MCF 10A (cell line): ENCODE measurements at regions of chr5 and their contacts with region 1.

Region 1: DNA sequence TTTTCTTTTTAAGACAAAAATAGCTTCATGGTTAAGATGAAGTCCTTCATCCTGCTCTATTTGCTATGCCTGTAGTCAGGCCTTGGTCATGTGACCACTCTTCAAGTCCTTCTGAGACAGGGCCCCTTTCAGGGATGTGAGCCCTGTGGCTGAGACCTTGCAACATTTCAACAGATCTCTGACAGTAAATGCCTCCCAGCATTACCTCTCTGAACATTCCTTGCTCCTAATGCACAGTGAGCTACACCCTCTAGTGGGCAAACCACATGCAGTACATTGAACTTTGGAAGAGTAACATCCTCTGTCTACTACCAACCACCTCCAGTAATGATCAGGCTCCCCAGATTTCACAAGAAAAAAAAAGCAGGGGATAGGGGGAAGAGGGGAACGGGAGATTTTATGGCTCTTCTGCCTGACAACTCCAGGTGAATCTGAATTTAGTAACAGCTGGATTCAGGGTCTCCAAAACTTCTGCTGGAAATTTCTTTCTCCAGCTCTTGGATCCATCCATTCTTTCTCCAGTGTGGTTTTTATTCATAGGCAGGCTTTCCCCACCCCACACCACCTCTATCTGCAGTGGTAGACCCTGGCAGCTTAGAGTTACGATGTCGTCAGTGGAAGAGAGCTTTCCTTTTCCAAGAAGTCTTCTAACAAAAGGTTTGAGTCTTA is 8.9 kb upstream of the FBXO38 start:
- DNase-seq: peak; percentile 86
- H3K4me3 Mint-ChIP-seq: no peak overlapping the region
- H3K27ac Mint-ChIP-seq: no peak overlapping the region
- H3K4me1 Mint-ChIP-seq: peaks cover 7% of the 10 kb centered on the region
- H3K27me3 Mint-ChIP-seq: no peaks in the 10 kb centered on the region
- CTCF ChIP-seq: peak; percentile 94

Region 2: GRCh38 chr5:148163345-148163744 is 211.5 kb before region 1 on chr5:
- CTCF ChIA-PET with region 1: interaction called, 10 read pairs
- POLR2A ChIA-PET with region 1: no interaction called
- intact Hi-C with region 1: no loop called
- DNase-seq: no peak
- H3K4me3 Mint-ChIP-seq: no peak overlapping the region
- H3K27ac Mint-ChIP-seq: no peak overlapping the region
- H3K4me1 Mint-ChIP-seq: no peaks in the 10 kb centered on the region
- H3K27me3 Mint-ChIP-seq: no peaks in the 10 kb centered on the region
- CTCF ChIP-seq: no peak

Region 3: GRCh38 chr5:148186248-148186996 is 188.4 kb before region 1 on chr5:
- CTCF ChIA-PET with region 1: interaction called, 118 read pairs
- POLR2A ChIA-PET with region 1: interaction called, 3 read pairs
- intact Hi-C with region 1: no loop called
- DNase-seq: peak; percentile 94
- H3K4me3 Mint-ChIP-seq: no peak overlapping the region
- H3K27ac Mint-ChIP-seq: peak overlapping the region; percentile 75
- H3K4me1 Mint-ChIP-seq: peaks cover 7% of the 10 kb centered on the region
- H3K27me3 Mint-ChIP-seq: no peaks in the 10 kb centered on the region
- CTCF ChIP-seq: no peak

Region 4: GRCh38 chr5:148290271-148291195 is 84.3 kb before region 1 on chr5:
- CTCF ChIA-PET with region 1: interaction called, 136 read pairs
- POLR2A ChIA-PET with region 1: no interaction called
- intact Hi-C with region 1: loop called (anchors 1 kb)
- DNase-seq: peak; percentile 51
- H3K4me3 Mint-ChIP-seq: no peak overlapping the region
- H3K27ac Mint-ChIP-seq: no peak overlapping the region
- H3K4me1 Mint-ChIP-seq: no peaks in the 10 kb centered on the region
- H3K27me3 Mint-ChIP-seq: no peaks in the 10 kb centered on the region
- CTCF ChIP-seq: peak; percentile 71

Region 5: GRCh38 chr5:148314204-148314603 is 60.6 kb before region 1 on chr5:
- CTCF ChIA-PET with region 1: interaction called, 24 read pairs
- POLR2A ChIA-PET with region 1: no interaction called
- intact Hi-C with region 1: loop called (anchors 1 kb)
- DNase-seq: peak; percentile 53
- H3K4me3 Mint-ChIP-seq: no peak overlapping the region
- H3K27ac Mint-ChIP-seq: no peak overlapping the region
- H3K4me1 Mint-ChIP-seq: no peaks in the 10 kb centered on the region
- H3K27me3 Mint-ChIP-seq: no peaks in the 10 kb centered on the region
- CTCF ChIP-seq: peak; percentile 40

Region 6: DNA sequence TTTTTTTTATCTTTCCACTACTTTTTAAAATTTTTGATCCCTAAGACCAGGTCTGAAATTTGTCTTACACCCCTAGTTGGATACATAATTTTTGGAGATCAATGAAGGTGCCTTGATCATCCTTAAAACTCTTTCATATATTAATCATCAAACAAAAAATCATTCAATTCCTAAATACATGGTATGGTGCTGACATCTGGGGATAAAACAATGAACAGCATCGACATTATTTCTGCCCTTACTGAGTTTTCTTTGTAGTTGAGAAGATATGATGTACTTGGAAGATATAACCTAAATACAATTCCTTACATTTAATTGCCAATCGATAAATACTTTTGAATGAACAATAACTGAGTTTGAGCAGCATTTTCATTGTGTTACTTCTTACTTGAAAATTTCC is 21.2 kb before region 1 on chr5:
- CTCF ChIA-PET with region 1: interaction called, 14 read pairs
- POLR2A ChIA-PET with region 1: interaction called, 4 read pairs
- intact Hi-C with region 1: no loop called
- DNase-seq: peak; percentile 14
- H3K4me3 Mint-ChIP-seq: no peak overlapping the region
- H3K27ac Mint-ChIP-seq: no peak overlapping the region
- H3K4me1 Mint-ChIP-seq: no peaks in the 10 kb centered on the region
- H3K27me3 Mint-ChIP-seq: no peaks in the 10 kb centered on the region
- CTCF ChIP-seq: peak; percentile 29